Gastrocnemius medialis (tissue), 4 donors: ENCODE measurements at regions of chr12 and their contacts with region 1.

Region 1: DNA sequence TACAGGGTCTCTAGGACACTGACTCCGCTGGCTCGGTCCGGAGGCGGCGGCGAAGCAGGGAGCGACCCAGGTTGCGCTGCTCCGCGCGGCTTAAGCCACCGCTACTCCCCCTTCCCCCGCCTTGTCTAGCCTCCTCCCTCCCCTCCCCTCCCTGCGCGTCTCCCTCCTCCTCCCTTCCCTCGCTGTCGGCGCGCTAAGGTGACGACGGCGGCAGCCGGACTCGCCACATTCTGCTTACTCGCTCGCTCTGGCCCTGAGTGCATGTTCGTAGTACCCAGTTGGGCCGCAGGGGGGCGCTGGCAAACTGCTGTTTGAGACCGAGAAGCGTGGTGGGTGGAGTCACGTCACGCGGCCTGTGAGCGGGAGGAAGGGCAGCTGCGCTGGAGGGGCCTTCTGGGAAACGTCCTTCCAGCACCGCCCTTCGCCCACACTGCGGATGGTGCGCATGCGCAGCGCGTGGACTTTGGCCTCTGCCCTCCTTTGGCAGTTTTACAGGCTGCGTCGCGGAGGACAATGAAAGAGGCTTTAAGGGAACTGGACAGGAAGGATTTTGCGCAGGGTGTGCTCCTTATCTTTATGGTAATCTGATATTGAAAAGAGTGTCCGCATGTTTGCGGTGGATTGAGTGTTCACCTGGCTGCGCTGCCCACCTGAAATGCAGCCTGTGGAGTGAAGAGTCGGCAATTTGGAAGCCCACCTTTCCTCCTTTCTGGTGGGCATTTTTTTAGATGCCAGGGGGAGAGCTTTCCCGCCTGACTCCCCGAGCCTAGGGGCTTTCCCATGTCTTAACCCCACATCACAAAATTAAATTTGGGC is at the start of gene SCAF11:
- DNase-seq: peak; percentile 100
- ATAC-seq: peak; percentile 79 to 87
- H3K4me3 ChIP-seq: peak within 1 kb of the TSS; percentile 90 to 99 (median 90)
- H3K27ac ChIP-seq: peak within 1 kb of the TSS; percentile 99 to 100 (median 100)
- H3K4me1 ChIP-seq: peaks cover 39 to 41% of the 10 kb centered on the region in 2 donors
- H3K27me3 ChIP-seq: no peaks in the 10 kb centered on the region
- CTCF ChIP-seq: peak; percentile 97 to 100 (median 99)
- POLR2A ChIP-seq: peak; percentile 92 to 93
- total RNA-seq, gene SCAF11: 69.9 to 101 (median 97.7) TPM

Region 2: GRCh38 chr12:45290204-45290580 is 700.5 kb before region 1 on chr12:
- in situ Hi-C with region 1: no loop called
- intact Hi-C with region 1: loop called (anchors 5 kb)
- DNase-seq: peak; percentile 48 to 65
- ATAC-seq: peak; percentile 93
- H3K4me3 ChIP-seq: peak overlapping the region in 3 of 4 donors; percentile 13 to 27 (median 21)
- H3K27ac ChIP-seq: peak overlapping the region; percentile 89 to 93 (median 90)
- H3K4me1 ChIP-seq: peaks cover 39 to 40% of the 10 kb centered on the region in 2 donors
- H3K27me3 ChIP-seq: no peaks in the 10 kb centered on the region
- CTCF ChIP-seq: no peak
- POLR2A ChIP-seq: no peak

Region 3: DNA sequence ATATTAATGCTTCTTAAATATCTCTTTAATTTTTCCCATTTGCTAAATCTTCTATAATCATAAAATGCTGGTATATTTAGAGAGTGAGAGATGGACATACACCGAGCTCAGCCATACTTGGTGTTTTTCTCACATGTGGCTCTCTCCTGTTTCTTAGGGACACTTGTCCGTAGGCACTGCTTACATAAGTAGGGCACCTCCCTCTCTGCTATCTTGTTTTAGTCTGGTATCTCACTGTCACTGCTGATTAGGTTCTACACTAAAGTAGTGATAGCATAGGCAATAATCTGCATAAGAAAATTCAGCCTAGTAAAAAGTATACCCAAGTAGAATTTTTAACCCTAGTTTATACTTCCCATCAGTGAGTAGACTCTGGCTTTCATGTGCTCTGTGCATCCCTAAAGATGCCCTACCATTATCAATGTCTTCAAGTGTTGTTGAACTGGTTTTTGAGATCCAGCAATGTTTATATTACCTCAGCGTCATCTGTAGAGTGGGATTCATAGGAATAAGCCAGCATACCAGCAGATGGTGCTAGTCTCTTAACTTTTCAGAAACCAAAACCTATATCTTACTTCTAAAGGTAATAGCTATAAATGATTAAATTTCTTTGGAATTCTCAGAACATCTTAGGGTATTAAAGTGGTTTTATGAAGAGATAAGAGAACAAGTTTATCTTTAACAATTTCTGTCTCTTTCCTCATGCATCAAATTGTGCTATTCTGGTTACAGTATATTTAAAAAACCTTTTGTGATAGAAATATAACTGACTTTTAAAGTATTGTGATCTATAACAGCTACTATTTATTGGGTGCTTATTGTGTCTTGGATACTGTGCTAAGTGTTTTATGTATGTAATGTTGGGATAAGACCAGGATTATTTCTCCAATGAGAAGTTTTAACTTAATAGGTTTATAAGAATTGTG is 228.2 kb before region 1 on chr12:
- in situ Hi-C with region 1: loop called in 1 of 4 experiments (anchors 10 kb)
- intact Hi-C with region 1: no loop called
- DNase-seq: no peak
- ATAC-seq: peak; percentile 47 to 69
- H3K4me3 ChIP-seq: no peak overlapping the region
- H3K27ac ChIP-seq: no peak overlapping the region
- H3K4me1 ChIP-seq: peaks cover 8 to 20% of the 10 kb centered on the region in 2 donors
- H3K27me3 ChIP-seq: no peaks in the 10 kb centered on the region
- CTCF ChIP-seq: peak in 4 of 5 experiments; percentile 22 to 63 (median 36)
- POLR2A ChIP-seq: no peak

Region 4: DNA sequence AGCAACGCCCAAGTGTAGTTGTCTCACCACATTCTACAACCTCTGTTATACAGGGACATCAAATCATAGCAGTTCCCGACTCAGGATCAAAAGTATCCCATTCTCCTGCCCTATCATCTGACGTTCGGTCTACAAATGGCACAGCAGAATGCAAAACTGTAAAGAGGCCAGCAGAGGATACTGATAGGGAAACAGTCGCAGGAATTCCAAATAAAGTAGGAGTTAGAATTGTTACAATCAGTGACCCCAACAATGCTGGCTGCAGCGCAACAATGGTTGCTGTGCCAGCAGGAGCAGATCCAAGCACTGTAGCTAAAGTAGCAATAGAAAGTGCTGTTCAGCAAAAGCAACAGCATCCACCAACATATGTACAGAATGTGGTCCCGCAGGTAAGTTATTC is 138.2 kb before region 1 on chr12:
- in situ Hi-C with region 1: no loop called
- intact Hi-C with region 1: no loop called
- DNase-seq: no peak
- ATAC-seq: no peak
- H3K4me3 ChIP-seq: no peak overlapping the region
- H3K27ac ChIP-seq: no peak overlapping the region
- H3K4me1 ChIP-seq: peaks cover 0 to 14% of the 10 kb centered on the region in 2 donors
- H3K27me3 ChIP-seq: no peaks in the 10 kb centered on the region
- CTCF ChIP-seq: no peak
- POLR2A ChIP-seq: no peak

Region 5: DNA sequence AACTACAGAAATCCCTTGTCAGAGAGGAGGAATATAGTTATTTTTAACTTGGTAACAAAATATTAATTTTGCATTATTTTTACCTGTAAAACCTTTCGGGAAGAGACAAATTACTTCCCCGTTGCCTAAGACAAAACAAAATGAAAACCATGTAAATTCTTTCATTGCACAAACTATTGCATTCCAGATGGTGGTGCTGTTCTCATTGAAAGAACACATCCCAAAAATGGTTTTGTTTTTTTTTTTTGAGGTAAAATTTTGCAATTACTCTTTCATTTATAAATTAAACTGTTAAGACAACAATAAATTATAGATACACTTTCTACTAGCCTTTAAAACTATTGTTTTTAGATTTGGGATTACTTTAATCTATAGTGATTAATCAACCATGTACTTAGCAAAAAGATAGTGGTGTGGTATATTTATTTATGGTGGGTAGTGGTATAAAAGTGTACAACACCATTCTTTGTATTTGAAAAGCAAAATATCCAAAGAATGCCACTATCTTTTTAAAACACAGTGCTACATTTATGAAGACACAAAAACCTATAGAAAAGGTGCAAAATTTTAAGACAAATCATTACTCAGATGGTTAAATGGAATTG is 162.7 kb after region 1 on chr12:
- in situ Hi-C with region 1: no loop called
- intact Hi-C with region 1: loop called (anchors 10 kb)
- DNase-seq: no peak
- ATAC-seq: no peak
- H3K4me3 ChIP-seq: no peak overlapping the region
- H3K27ac ChIP-seq: no peak overlapping the region
- H3K4me1 ChIP-seq: no peaks in the 10 kb centered on the region
- H3K27me3 ChIP-seq: no peaks in the 10 kb centered on the region
- CTCF ChIP-seq: peak in 3 of 5 experiments; percentile 25 to 55 (median 48)
- POLR2A ChIP-seq: no peak

Region 6: DNA sequence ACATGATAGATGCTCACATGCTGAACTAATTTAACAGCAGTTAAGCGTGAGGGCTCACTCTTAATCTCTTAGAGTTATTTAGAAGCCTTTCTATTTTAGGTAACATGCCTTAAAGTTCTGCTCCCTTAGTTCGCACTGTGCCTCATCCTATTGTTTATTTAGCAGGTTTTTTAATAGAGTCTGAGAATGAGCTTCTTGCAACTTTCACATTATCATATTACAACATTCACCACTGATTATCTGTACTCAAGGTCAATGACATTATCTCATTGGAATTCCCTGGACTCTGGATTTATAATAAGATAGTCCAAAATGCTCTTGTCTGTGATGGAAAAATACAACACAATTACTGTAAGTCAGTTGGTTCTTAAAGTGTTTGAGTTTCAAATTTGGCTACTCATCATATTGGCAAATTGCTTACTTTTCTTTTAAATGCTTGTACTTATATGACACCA is 565.5 kb after region 1 on chr12:
- in situ Hi-C with region 1: no loop called
- intact Hi-C with region 1: loop called (anchors 5 kb)
- DNase-seq: peak in 1 of 2 donors; percentile 40
- ATAC-seq: peak; percentile 43 to 89
- H3K4me3 ChIP-seq: peak overlapping the region in 1 of 4 donors; percentile 0
- H3K27ac ChIP-seq: peak overlapping the region; percentile 68 to 90 (median 80)
- H3K4me1 ChIP-seq: peaks cover 72 to 82% of the 10 kb centered on the region in 2 donors
- H3K27me3 ChIP-seq: no peaks in the 10 kb centered on the region
- CTCF ChIP-seq: no peak
- POLR2A ChIP-seq: peak in 1 of 2 donors; percentile 34